ENCODE measurements at regions of chr13 and their contacts with region 1.

Region 1: DNA sequence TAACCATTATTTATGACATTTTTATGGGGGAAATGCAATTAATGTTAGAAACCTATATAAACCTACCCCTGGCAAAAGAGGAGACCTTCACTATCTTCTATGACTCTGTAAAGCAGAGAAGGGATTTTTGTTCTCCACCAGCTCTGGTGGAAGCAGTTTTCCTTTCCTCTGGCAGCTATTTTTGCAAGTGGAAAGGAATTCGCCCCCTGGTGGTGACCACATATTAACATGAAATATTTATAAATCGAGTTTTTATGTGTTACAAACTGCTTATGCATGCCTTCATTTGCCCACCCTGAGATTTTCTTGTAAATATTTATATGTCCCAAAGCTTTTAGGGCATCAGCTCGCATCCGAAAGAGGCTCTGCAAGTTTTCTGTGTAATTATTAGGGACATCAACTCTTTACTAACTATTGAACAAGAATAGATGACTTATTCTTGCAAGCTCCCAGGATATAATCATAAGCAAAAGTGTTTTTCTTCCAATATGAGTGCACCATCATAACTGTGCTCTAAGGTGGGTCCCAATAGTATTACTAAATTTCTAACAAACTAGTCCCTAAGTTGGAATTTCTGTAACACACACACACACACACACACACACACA is 62.4 kb downstream of the SERTM1 start:
- DNase-seq: peak; percentile 51
- H3K4me3 Mint-ChIP-seq: no peak overlapping the region
- H3K27ac Mint-ChIP-seq: no peak overlapping the region
- H3K4me1 Mint-ChIP-seq: no peaks in the 10 kb centered on the region
- H3K27me3 Mint-ChIP-seq: peaks cover 8% of the 10 kb centered on the region

Region 2: GRCh38 chr13:36282818-36283445 is 453.3 kb before region 1 on chr13:
- CTCF ChIA-PET with region 1: interaction called, 20 read pairs
- DNase-seq: no peak
- H3K4me3 Mint-ChIP-seq: no peak overlapping the region
- H3K27ac Mint-ChIP-seq: no peak overlapping the region
- H3K4me1 Mint-ChIP-seq: no peaks in the 10 kb centered on the region
- H3K27me3 Mint-ChIP-seq: peaks cover 18% of the 10 kb centered on the region

Region 3: GRCh38 chr13:36346222-36347083 is 389.8 kb before region 1 on chr13 and contains the start of gene SPART:
- CTCF ChIA-PET with region 1: interaction called, 16 read pairs
- DNase-seq: peak; percentile 93
- H3K4me3 Mint-ChIP-seq: peak within 1 kb of the TSS; percentile 87
- H3K27ac Mint-ChIP-seq: peak within 1 kb of the TSS; percentile 96
- H3K4me1 Mint-ChIP-seq: peaks cover 23% of the 10 kb centered on the region
- H3K27me3 Mint-ChIP-seq: peaks cover 7% of the 10 kb centered on the region

Region 4: DNA sequence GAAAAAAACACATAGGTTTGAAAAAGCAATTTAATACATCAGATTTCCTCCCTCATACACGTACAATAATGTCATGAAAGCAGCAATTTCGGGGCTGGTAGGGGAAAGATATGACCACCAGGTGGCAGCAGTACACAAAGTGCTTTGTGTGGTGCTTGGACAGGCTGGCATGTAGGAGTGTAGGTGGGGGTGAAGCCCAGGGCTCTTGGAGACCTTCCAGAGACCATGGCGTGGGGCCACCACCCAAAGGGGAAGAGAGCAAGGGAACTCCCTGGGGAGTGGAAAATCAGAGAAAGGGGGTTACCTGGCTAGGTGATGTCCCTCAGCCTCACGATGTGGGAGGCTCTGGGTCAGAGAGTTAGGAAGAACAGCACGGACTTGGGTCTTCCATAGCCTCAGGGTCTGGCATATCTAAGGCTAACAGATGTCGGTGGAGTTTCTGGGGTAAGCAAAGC is 315.8 kb before region 1 on chr13:
- CTCF ChIA-PET with region 1: interaction called, 58 read pairs
- DNase-seq: peak; percentile 78
- H3K4me3 Mint-ChIP-seq: no peak overlapping the region
- H3K27ac Mint-ChIP-seq: no peak overlapping the region
- H3K4me1 Mint-ChIP-seq: peaks cover 22% of the 10 kb centered on the region
- H3K27me3 Mint-ChIP-seq: peaks cover 23% of the 10 kb centered on the region

Region 5: DNA sequence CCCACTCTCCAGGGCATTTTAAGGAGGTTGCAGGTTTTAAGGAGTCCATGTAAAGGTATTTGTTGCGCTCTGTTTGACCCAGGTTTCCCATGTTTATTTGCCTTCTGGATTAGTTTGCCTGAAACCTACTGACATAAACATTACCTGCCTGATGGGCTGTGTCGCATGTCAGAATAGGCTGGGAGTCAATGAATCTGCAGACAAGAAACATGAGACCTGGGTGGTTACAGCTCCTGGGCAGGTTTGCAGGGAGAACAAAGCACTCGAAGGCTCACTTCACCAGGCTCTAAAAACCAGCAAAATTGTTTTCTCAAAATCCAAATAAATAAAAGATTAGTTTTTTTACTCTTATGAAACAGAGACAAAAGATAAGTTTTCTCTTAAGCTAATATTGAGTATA is 176.8 kb before region 1 on chr13:
- CTCF ChIA-PET with region 1: no interaction called
- DNase-seq: no peak
- H3K4me3 Mint-ChIP-seq: no peak overlapping the region
- H3K27ac Mint-ChIP-seq: no peak overlapping the region
- H3K4me1 Mint-ChIP-seq: no peaks in the 10 kb centered on the region
- H3K27me3 Mint-ChIP-seq: no peaks in the 10 kb centered on the region

Region 6: GRCh38 chr13:36758345-36758744 is 22.1 kb after region 1 on chr13:
- CTCF ChIA-PET with region 1: no interaction called
- DNase-seq: no peak
- H3K4me3 Mint-ChIP-seq: no peak overlapping the region
- H3K27ac Mint-ChIP-seq: no peak overlapping the region
- H3K4me1 Mint-ChIP-seq: no peaks in the 10 kb centered on the region
- H3K27me3 Mint-ChIP-seq: peaks cover 6% of the 10 kb centered on the region

Region 7: GRCh38 chr13:36834299-36834698 is 98.1 kb after region 1 on chr13:
- CTCF ChIA-PET with region 1: no interaction called
- DNase-seq: no peak
- H3K4me3 Mint-ChIP-seq: no peak overlapping the region
- H3K27ac Mint-ChIP-seq: no peak overlapping the region
- H3K4me1 Mint-ChIP-seq: no peaks in the 10 kb centered on the region
- H3K27me3 Mint-ChIP-seq: no peaks in the 10 kb centered on the region

Measured in activated naive CD4-positive, alpha-beta T cell treated with anti-CD3 and anti-CD28 coated beads, Interleukin-2, amount 10 ng/mL, durations not matched to agents 7 days and 5 days (primary cell).